Lower leg skin (tissue), 4 donors: ENCODE measurements at regions of chr22 and their contacts with region 1.

Region 1: DNA sequence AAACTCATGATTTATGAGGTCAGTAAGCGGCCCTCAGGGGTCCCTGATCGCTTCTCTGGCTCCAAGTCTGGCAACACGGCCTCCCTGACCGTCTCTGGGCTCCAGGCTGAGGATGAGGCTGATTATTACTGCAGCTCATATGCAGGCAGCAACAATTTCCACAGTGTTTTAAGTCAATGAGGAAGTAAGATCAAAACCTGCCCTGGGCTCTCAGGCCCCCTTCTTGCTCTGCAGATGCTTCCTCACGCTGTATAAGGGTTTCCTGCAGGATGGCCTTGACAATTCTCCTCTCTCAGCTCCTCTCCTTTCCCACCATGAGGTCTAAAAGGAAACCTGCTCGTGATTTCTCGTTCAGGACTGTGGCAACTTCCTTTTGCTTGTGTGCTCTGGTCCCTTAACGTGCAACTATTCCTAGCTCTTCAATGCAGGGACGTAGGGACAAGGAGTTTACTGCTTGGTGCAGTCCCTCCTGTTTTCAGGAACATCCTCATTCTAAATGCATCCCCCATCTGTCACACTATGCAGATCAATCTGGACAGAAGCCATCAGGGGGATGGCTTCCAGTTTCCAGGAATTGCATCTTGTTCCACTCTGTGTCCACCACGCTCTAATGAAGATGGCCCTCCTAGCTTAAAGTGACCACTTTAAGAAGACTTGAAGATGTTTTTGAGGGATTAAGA is 64.3 kb upstream of the IGLL5 start:
- DNase-seq: no peak
- H3K4me3 ChIP-seq: no peak overlapping the region
- CTCF ChIP-seq: no peak
- POLR2A ChIP-seq: no peak

Region 2: GRCh38 chr22:22802339-22802970 is 20.8 kb before region 1 on chr22:
- intact Hi-C with region 1: loop called (anchors 1 kb)
- DNase-seq: no peak
- H3K4me3 ChIP-seq: no peak overlapping the region
- CTCF ChIP-seq: no peak
- POLR2A ChIP-seq: no peak

Region 3: DNA sequence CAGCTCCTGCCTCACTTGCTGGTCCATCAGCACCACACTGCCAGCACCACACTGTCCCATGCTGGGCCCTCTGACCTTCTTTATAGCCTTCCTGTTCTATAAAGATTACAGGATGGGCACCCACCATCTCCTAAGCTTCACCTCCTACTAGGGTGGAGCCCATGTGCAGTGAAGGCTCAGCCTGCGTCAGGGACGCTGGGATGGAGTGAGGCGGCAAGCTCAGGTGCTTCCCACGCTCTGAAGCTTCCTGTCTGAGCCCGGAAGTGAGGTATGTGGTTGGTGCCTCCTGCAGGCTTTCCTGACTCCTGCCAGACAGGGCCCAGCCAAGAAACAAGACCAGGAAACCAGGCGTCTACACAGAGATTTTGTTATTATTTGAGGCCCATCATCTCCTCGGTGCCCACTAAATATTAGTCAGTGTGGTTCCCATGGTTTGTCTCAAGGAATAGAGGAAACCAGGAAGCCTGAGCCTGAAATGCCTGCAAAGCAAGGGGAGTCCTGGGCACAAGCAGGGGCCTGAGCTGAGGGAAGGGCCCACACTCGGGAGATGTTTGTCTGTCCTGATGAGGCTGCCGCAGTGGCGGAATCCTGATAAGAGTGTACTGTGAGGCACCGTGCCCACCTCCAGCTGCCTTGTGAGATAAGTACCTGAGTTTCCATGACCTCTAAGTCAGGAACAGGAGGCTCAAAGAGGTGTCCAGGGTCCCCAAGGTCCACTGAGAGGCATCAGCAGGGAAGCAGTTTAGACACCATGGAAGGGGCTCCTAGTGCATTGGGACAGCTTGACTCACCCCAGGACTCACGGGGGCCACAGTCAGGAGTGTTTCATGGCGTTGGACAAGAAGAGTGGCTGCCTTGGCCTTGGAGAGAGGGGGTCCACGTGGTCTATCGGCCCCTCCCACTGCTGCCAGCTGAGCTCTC is 296.5 kb after region 1 on chr22:
- intact Hi-C with region 1: no loop called
- DNase-seq: no peak
- H3K4me3 ChIP-seq: no peak overlapping the region
- CTCF ChIP-seq: no peak
- POLR2A ChIP-seq: no peak